AG04450 (cell line): ENCODE measurements at regions of chr1 and their contacts with region 1.

Region 1: DNA sequence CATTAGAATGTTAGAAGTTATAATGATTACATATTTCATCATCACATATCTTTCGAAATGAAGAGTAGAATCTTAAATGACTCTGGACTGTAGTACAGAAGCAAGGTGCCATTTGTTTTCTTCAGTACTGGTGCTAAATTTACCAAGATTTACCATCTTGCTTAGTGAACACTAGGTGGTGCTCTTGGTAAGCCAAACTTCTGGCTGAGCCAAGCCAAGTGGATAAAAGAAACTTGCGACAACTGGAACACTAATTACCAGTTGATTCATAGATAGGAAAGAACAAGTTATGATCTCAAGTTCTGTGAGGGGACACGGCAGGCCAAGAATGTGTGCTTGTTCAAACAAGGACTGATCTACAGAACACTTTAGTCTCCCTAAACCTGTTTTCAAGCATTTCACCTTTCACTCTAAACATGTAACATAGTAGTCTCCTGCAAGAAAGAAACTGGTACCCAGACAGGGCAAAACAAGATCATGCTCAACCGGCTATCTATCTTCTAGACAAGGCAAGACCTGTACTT is 19.8 kb downstream of the SPRTN start:
- DNase-seq: no peak
- H3K4me3 ChIP-seq: no peak overlapping the region
- H3K27ac ChIP-seq: no peak overlapping the region
- H3K27me3 ChIP-seq: no peaks in the 10 kb centered on the region
- CTCF ChIP-seq: peak; percentile 80

Region 2: GRCh38 chr1:230832476-230832875 is 525.4 kb before region 1 on chr1:
- CTCF ChIA-PET with region 1: interaction called, 10 read pairs
- POLR2A ChIA-PET with region 1: no interaction called
- DNase-seq: no peak
- H3K4me3 ChIP-seq: no peak overlapping the region
- H3K27ac ChIP-seq: no peak overlapping the region
- H3K27me3 ChIP-seq: no peaks in the 10 kb centered on the region
- CTCF ChIP-seq: no peak

Region 3: GRCh38 chr1:231337472-231338269 is 20.2 kb before region 1 on chr1 and contains the start of gene EXOC8:
- CTCF ChIA-PET with region 1: interaction called, 10 read pairs
- POLR2A ChIA-PET with region 1: interaction called, 12 read pairs
- DNase-seq: peak; percentile 94
- H3K4me3 ChIP-seq: peak within 1 kb of the TSS; percentile 99
- H3K27ac ChIP-seq: peak within 1 kb of the TSS; percentile 99
- H3K27me3 ChIP-seq: no peaks in the 10 kb centered on the region
- CTCF ChIP-seq: no peak
- polyA plus RNA-seq, gene EXOC8: 4.1 and 5.0 TPM in 2 replicates

Region 4: DNA sequence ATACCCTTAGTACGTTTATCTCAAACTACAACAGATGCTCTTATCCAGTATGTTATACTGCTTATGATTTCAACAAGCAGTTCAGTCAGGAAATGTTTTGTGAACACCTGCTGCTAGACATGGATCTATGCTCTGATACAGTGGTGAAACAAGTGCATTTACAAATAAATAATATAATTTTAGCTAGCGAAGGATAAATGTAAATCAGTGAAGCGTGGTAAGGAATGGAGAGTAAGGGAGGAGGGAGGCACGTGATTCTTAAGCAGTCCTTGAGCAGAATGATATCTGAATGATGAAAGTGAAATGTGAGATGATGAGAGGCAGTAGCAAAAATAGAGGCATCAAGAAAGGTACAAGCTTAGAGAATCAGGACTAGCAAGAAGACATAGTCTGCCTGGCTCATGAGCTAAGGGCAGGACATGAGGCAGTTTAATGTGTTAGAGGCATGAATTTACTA is 176.8 kb after region 1 on chr1:
- CTCF ChIA-PET with region 1: interaction called, 4 read pairs
- POLR2A ChIA-PET with region 1: interaction called, 10 read pairs
- DNase-seq: no peak
- H3K4me3 ChIP-seq: no peak overlapping the region
- H3K27ac ChIP-seq: no peak overlapping the region
- H3K27me3 ChIP-seq: no peaks in the 10 kb centered on the region
- CTCF ChIP-seq: no peak

Region 5: DNA sequence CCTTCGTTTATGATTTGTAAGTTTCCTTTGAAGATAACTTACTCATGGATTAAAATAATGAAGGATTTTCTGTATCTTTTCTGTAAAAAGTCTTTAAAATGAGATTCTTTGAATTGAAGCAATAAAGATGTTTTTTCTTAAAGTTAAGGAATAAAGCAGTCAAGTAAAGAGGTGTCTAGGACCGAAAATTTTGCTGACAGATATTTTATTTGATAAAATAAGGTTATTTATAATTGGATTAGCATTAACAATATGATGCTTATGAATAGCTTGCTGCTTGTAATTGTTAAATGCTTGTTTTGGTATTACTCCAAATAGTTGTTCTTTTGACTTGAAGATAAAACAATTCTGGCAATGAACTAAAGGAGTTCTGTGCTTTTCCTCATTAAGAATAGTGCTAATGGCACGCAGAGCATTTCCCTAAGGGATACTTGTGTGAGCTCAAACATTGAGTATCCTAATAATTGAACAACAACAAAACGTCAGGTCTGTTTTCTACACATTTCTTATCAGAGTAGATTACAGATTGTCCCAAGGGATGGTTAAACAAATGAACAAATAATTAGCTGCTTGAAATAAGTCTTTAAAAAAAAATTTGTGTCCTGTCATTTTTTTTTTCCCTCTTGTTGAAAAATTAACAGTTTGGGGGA is 187.2 kb after region 1 on chr1:
- CTCF ChIA-PET with region 1: interaction called, 12 read pairs
- POLR2A ChIA-PET with region 1: no interaction called
- DNase-seq: no peak
- H3K4me3 ChIP-seq: no peak overlapping the region
- H3K27ac ChIP-seq: no peak overlapping the region
- H3K27me3 ChIP-seq: no peaks in the 10 kb centered on the region
- CTCF ChIP-seq: no peak

Region 6: GRCh38 chr1:231603598-231604275 is 245.8 kb after region 1 on chr1:
- CTCF ChIA-PET with region 1: interaction called, 22 read pairs
- POLR2A ChIA-PET with region 1: no interaction called
- DNase-seq: no peak
- H3K4me3 ChIP-seq: peak overlapping the region; percentile 53
- H3K27ac ChIP-seq: no peak overlapping the region
- H3K27me3 ChIP-seq: no peaks in the 10 kb centered on the region
- CTCF ChIP-seq: peak; percentile 72